ENCODE measurements at regions of chr10 and their contacts with region 1.

Region 1: DNA sequence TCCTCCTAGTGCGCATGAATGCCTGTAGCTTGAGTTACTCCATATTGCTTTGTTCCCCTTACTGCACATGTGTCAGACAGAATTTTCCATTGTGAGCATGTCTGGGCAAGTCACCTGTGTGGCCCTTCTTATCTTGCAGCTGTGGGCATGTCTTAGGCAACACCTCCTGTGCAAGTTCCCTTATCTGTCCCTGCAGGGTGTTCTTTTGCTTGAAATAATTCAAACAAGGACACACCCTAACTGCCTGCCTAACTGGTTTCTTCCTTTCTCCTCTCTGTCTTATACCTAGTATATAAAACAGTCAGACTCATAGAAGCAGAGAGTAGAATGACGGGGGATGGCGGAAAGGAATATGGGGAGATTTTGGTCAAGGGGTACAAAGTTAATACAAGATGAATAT is 421.1 kb upstream of the SORCS1 start:
- DNase-seq: no peak
- ATAC-seq: no peak
- H3K4me3 ChIP-seq: no peak overlapping the region
- H3K27ac ChIP-seq: no peak overlapping the region
- H3K4me1 ChIP-seq: no peaks in the 10 kb centered on the region
- H3K27me3 ChIP-seq: no peaks in the 10 kb centered on the region
- CTCF ChIP-seq: no peak

Region 2: GRCh38 chr10:107631876-107632275 is 46.2 kb after region 1 on chr10:
- intact Hi-C with region 1: loop called in 1 of 10 experiments (anchors 1 kb)
- DNase-seq: no peak
- ATAC-seq: no peak
- H3K4me3 ChIP-seq: no peak overlapping the region
- H3K27ac ChIP-seq: no peak overlapping the region
- H3K4me1 ChIP-seq: no peaks in the 10 kb centered on the region
- H3K27me3 ChIP-seq: no peaks in the 10 kb centered on the region
- CTCF ChIP-seq: no peak

Region 3: GRCh38 chr10:107686095-107686494 is 100.5 kb after region 1 on chr10:
- intact Hi-C with region 1: no loop called
- DNase-seq: peak in 1 of 2 donors; percentile 5
- ATAC-seq: peak in 2 of 8 donors; percentile 55 to 59
- H3K4me3 ChIP-seq: no peak overlapping the region
- H3K27ac ChIP-seq: peak overlapping the region in 1 of 10 donors; percentile 72
- H3K4me1 ChIP-seq: peaks cover 0 to 43% (median 0%) of the 10 kb centered on the region in 9 donors
- H3K27me3 ChIP-seq: no peaks in the 10 kb centered on the region
- CTCF ChIP-seq: no peak